IMR-90 (cell line): ENCODE measurements at regions of chr10 and their contacts with region 1.

Region 1: GRCh38 chr10:68880181-68880580 is 20.9 kb upstream of the DDX50 start:
- DNase-seq: no peak
- ATAC-seq: no peak
- H3K4me3 ChIP-seq: no peak overlapping the region
- H3K27ac ChIP-seq: no peak overlapping the region
- H3K4me1 ChIP-seq: peaks cover 1% of the 10 kb centered on the region; the same call in 1 of the 2 replicates
- H3K27me3 ChIP-seq: peaks cover 17% of the 10 kb centered on the region
- CTCF ChIP-seq: no peak
- POLR2A ChIP-seq: no peak
- RAD21 ChIP-seq: no peak

Region 2: GRCh38 chr10:68848793-68849192 is 31.4 kb before region 1 on chr10:
- CTCF ChIA-PET with region 1: no interaction called
- POLR2A ChIA-PET with region 1: no interaction called
- dilution Hi-C with region 1: no loop called
- in situ Hi-C with region 1: no loop called
- intact Hi-C with region 1: loop called (anchors 5 kb)
- DNase-seq: no peak
- ATAC-seq: no peak
- H3K4me3 ChIP-seq: no peak overlapping the region
- H3K27ac ChIP-seq: no peak overlapping the region
- H3K4me1 ChIP-seq: no peaks in the 10 kb centered on the region
- H3K27me3 ChIP-seq: peaks cover 2% of the 10 kb centered on the region
- CTCF ChIP-seq: no peak
- POLR2A ChIP-seq: no peak
- RAD21 ChIP-seq: no peak